ENCODE measurements at regions of chr3 and their contacts with region 1.

Region 1: GRCh38 chr3:134212906-134213665 is 37.6 kb downstream of the RYK start:
- DNase-seq: peak; percentile 88
- ATAC-seq: peak; percentile 91
- H3K4me3 Mint-ChIP-seq: no peak overlapping the region
- H3K27ac Mint-ChIP-seq: no peak overlapping the region
- H3K4me1 Mint-ChIP-seq: peaks cover 10% of the 10 kb centered on the region
- H3K27me3 Mint-ChIP-seq: no peaks in the 10 kb centered on the region

Region 2: DNA sequence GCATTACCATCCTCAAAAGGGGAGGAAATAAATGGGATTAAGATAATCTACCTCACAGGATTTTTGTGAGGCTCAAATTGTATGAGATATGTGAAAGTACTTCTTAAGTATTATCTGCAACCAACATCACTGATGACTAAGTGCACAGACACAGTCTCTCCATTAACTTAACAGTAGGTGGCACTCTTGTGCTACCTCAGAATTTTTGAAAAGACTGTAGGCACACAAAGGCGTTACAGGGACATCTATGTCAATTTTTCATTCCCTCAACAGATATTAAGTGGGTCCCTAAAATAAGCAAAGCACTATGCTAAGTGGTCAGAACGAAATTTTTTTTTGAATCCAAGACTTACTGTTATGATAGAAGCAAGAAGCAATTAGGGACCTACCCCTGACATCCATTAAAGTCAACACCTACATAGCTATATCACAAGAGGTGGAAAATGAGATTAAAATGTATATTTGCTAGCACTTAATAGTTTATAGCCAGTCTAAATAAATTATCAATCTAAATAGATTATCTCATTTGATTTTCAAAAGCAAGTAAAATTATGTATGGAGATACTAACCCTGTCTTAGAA is 15.3 kb before region 1 on chr3:
- CTCF ChIA-PET with region 1: interaction called, 79 read pairs
- POLR2A ChIA-PET with region 1: no interaction called
- DNase-seq: peak; percentile 44
- ATAC-seq: peak; percentile 84
- H3K4me3 Mint-ChIP-seq: no peak overlapping the region
- H3K27ac Mint-ChIP-seq: no peak overlapping the region
- H3K4me1 Mint-ChIP-seq: peaks cover 2% of the 10 kb centered on the region
- H3K27me3 Mint-ChIP-seq: no peaks in the 10 kb centered on the region

Region 3: GRCh38 chr3:134239538-134239937 is 26.5 kb after region 1 on chr3:
- CTCF ChIA-PET with region 1: interaction called, 13 read pairs
- POLR2A ChIA-PET with region 1: no interaction called
- DNase-seq: no peak
- ATAC-seq: no peak
- H3K4me3 Mint-ChIP-seq: no peak overlapping the region
- H3K27ac Mint-ChIP-seq: no peak overlapping the region
- H3K4me1 Mint-ChIP-seq: peaks cover 26% of the 10 kb centered on the region
- H3K27me3 Mint-ChIP-seq: peaks cover 3% of the 10 kb centered on the region

Region 4: DNA sequence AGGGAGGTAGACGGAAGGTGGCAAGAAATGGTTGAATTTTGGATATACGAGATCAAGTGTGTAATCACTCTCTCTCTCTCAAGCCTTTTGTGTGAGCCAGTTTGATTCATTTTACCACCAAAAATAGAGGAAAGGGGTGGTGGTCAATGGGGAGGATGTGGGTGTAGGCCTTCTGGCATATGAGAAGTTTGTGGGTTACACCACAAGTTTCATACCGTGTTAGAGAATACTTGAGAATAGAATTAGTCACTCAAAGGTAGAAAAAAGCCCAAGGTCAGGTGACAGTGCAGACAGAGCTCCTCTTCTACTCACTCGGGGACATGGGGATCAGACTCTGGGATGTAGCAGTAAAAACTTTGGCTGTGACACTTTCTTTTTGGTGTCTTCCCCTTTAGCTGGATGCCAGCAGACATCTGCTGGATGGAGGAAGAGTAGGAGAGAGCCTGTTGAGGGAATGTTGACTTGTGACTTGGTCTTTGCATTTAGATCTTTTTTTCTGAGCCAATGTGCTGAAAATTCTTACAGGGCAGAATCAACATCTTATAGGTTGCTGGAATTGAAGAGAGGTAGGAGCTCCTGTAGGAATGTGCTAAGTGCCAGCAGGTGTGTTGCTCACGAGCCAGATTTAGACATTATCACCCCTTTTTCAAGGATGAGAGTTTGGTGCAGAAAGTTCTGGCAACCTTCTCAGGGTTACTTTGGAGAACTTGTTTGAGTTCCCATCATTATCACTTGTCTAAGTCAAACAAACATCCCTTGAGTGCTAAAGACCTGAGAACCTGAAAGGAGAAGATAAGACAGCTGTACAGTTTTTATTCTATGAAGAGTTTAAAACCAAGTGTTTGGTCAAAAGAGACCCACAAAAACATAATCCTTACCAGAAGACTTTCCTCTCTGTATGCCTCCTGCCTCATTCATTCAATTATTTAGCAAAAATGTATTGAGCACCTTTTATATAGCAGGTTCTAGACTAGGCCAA is 81.5 kb after region 1 on chr3:
- CTCF ChIA-PET with region 1: interaction called, 12 read pairs
- POLR2A ChIA-PET with region 1: no interaction called
- DNase-seq: peak; percentile 86
- ATAC-seq: peak; percentile 98
- H3K4me3 Mint-ChIP-seq: no peak overlapping the region
- H3K27ac Mint-ChIP-seq: no peak overlapping the region
- H3K4me1 Mint-ChIP-seq: no peaks in the 10 kb centered on the region
- H3K27me3 Mint-ChIP-seq: peaks cover 32% of the 10 kb centered on the region

Measured in activated CD8-positive, alpha-beta T cell treated with anti-CD3 and anti-CD28 coated beads, Interleukin-2, amount 10 ng/mL, durations not matched to agents 7 days and 5 days (primary cell).